Tibial artery (tissue), 4 donors: ENCODE measurements at regions of chr3 and their contacts with region 1.

Region 1: GRCh38 chr3:29764603-29765254 is 483.9 kb downstream of the RBMS3 start:
- DNase-seq: no peak
- H3K4me3 ChIP-seq: no peak overlapping the region
- H3K27ac ChIP-seq: no peak overlapping the region
- H3K4me1 ChIP-seq: peaks cover 0 to 32% (median 4%) of the 10 kb centered on the region in 4 donors
- H3K27me3 ChIP-seq: no peaks in the 10 kb centered on the region
- CTCF ChIP-seq: peak; percentile 60 to 65

Region 2: DNA sequence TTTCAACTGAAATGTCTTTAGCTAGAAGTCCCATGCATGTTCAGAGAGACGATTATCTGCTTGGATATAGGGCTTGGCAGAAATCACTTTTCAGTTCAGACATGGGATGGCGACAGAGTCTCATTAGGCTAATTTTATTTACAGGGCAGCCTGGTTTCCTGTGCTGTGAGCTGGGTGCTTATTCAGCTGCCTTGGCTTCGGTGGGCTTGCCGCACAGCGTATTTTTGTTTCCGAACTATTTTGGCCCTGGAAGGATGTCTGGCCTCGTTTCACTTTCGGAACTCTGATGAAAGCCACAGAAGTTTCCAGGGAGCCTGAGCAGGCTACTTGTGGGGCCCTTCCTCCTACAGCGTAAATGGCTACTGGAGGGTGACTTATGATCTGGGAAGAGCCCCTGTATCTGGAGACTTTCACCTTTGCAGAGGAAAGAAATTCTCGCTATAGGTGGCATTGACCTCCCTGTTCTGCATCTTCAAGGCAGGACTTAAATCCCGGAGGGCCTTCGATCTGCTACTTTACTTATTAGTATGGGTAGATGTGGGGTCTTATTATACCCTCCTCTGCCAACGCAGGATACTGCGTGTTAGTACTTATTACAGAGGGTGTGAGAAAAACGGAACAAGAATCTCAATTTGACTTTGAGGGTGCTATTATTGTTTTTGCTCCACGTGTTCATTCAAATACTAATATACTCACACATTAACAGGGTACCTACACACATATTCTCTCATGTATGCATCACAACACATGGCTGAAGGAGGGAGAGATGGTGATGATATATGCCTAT is 847.8 kb before region 1 on chr3:
- intact Hi-C with region 1: loop called (anchors 5 kb)
- DNase-seq: peak; percentile 74 to 83
- H3K4me3 ChIP-seq: peak overlapping the region; percentile 32 to 42
- H3K27ac ChIP-seq: peak overlapping the region; percentile 59 to 67
- H3K4me1 ChIP-seq: peaks cover 0 to 15% (median 9%) of the 10 kb centered on the region in 4 donors
- H3K27me3 ChIP-seq: no peaks in the 10 kb centered on the region
- CTCF ChIP-seq: peak; percentile 59 to 74

Region 3: DNA sequence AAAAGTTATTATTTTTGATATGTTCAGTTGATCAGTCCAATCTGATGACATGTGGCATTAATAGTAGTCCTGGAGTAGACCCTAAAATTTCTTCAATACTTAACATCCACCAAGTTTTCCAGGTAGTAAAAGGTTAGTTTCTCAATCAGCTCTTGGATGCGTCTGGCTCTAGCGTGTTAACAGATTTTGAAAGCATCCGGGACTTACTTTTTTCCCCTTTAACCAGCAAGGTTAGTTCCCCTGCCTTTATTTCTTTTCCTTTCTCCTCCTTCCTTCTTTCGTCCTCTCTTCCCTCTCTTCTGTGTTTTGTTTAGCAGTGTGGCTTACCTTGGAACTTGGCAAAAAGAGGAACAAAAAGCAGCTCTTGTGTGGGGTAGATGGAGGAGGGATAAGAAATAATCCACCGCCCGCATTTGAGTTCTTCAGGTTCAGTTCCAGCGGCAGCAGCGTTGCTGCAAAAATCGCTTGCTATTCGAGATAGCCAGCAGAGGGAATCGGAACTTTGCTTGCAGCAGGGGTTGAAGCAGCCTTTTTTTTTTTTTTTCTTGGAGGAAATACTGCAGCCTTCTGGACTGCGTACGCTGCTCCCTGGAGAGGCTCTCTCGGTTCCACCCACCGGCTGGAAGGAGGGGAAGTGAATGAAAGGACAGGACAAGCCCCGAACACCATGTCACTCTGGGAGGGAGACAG is 484.2 kb before region 1 on chr3 and contains the start of gene RBMS3:
- intact Hi-C with region 1: loop called (anchors 5 kb)
- DNase-seq: peak; percentile 94 to 96
- H3K4me3 ChIP-seq: peak within 1 kb of the TSS; percentile 56 to 64
- H3K27ac ChIP-seq: peak within 1 kb of the TSS; percentile 82 to 89
- H3K4me1 ChIP-seq: peaks cover 0 to 26% (median 6%) of the 10 kb centered on the region in 4 donors
- H3K27me3 ChIP-seq: no peaks in the 10 kb centered on the region
- CTCF ChIP-seq: peak; percentile 37 to 55

Region 4: DNA sequence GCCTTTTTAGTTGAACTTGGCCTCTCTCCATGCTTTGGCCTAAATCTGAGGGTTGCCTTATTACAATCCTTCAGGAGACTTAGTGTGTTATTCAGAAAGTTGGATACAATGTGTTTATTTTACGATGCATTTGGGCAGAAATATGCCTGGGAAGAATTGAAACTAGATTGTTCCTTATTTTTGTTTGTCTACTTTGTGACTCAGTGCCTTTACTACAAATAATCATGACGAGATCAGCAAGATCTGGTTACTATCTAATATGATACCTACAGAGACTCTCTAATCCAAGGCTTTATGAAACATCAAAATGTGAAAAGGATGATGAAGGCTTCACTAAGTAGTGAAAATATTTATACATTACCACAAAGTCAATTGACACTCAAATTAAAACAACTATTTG is 401.6 kb before region 1 on chr3:
- intact Hi-C with region 1: no loop called
- DNase-seq: no peak
- H3K4me3 ChIP-seq: no peak overlapping the region
- H3K27ac ChIP-seq: no peak overlapping the region
- H3K4me1 ChIP-seq: peaks cover 0 to 47% (median 5%) of the 10 kb centered on the region in 4 donors
- H3K27me3 ChIP-seq: no peaks in the 10 kb centered on the region
- CTCF ChIP-seq: no peak

Region 5: DNA sequence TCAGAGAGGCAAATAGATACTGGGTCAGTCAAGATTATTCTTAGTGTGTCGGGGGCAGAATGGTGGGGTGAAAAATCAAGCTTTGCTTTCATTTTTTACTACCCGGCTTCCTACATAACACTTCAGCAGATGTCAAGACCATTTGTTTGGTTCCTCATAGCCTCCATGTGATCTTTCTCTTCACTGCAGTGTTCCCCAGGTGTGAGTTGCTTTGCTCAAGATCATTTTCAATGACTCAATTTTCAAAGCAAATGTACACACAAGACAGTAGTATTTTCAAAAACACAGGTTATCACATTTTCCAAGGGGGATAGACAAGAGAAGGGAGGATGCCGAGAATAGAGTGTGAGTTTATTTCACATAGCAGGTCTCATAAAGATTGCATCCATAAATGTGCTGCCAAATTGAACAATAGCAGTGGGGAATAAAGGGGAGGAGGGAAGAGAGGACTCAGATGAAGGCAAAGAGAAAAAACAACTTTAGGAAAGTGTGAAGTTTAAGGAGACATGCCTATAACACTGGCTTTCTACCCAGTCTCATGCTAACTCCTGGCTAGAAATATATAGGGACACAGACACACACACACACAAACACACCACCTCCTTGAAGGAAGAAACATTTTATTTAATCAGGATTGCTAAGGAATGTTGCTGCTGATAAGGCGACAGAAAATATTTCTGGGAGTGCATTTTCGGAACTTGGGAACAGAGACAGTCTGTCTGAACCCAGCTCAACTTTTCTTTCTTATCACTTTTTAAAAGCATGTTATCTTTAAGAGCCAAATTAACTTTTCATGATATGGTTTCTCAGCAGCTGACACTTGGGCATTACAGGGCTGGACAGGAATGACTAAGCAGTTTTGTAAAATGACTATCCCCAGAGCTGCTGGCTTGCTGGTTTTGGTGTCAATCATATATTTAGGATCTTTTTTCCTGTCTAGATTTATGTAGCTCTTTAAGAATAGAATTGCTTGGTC is 81.4 kb before region 1 on chr3:
- intact Hi-C with region 1: no loop called
- DNase-seq: no peak
- H3K4me3 ChIP-seq: no peak overlapping the region
- H3K27ac ChIP-seq: peak overlapping the region; percentile 56 to 82
- H3K4me1 ChIP-seq: peaks cover 0 to 36% (median 16%) of the 10 kb centered on the region in 4 donors
- H3K27me3 ChIP-seq: no peaks in the 10 kb centered on the region
- CTCF ChIP-seq: no peak